Panc1 (cell line): ENCODE measurements at regions of chr9 and their contacts with region 1.

Region 1: GRCh38 chr9:72038890-72039410 is 21.5 kb downstream of the C9orf57 start:
- DNase-seq: peak; percentile 78
- ATAC-seq: peak; percentile 91
- H3K4me3 ChIP-seq: no peak overlapping the region
- H3K27ac ChIP-seq: peak overlapping the region; percentile 2; the same call in 1 of the 2 replicates
- H3K4me1 ChIP-seq: peaks cover 3% of the 10 kb centered on the region; the same call in 1 of the 2 replicates
- H3K27me3 ChIP-seq: no peaks in the 10 kb centered on the region
- CTCF ChIP-seq: peak; percentile 84

Region 2: DNA sequence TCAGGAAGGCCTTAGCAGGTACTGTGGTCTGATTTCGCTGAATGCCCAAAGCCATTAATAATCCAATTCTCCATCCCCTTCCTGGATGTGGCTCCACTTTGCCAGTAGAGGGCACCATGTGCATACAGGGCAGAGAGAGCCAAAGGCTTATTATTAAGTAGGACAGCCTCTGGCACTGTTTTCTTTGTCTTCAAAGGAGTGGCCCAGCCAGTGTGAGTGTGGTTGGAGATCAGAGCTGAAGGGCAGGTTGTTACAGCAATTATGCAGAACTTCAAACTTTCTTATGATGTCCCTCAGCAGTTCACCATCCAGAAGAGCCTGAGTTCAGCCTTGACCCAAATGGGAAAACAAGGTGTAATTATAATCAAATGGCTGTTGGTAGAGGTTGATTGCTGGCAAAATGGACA is 232.0 kb before region 1 on chr9:
- CTCF ChIA-PET with region 1: interaction called, 4 read pairs
- POLR2A ChIA-PET with region 1: interaction called, 12 read pairs
- in situ Hi-C with region 1: no loop called
- intact Hi-C with region 1: no loop called
- DNase-seq: peak; percentile 51
- ATAC-seq: peak; percentile 97
- H3K4me3 ChIP-seq: no peak overlapping the region
- H3K27ac ChIP-seq: peak overlapping the region; percentile 39; the same call in 1 of the 2 replicates
- H3K4me1 ChIP-seq: peaks cover 7% of the 10 kb centered on the region
- H3K27me3 ChIP-seq: no peaks in the 10 kb centered on the region
- CTCF ChIP-seq: peak; percentile 92

Region 3: DNA sequence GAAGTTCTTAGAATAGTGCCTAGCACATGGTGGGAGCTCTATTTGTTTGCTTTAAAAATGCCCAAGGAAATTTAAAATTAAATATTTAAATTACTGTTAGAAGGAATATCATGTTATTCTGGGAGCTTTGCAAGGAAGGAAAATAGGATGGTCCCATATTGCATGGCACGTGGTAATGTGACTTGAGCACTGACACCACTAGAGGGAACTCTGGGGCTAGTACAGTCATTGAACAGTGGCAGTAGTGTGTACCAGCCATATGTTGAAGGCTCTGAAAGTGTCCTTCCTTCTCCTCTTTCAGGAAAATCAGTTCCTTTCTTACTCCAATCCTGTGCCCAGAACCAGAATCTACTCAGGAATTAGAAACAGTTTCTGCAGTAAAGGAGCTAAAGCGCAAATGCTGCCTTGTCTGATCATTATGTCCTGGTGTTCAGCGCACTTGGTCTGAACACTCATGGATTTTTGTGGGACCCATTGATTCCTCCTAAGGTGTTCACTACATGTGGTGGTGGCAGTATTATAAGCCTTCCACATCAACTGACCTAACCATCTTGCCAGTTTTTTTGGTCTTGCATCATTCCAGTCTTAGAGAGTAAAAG is 164.4 kb after region 1 on chr9:
- CTCF ChIA-PET with region 1: interaction called, 5 read pairs
- POLR2A ChIA-PET with region 1: no interaction called
- in situ Hi-C with region 1: no loop called
- intact Hi-C with region 1: loop called (anchors 5 kb)
- DNase-seq: peak; percentile 18
- ATAC-seq: peak; percentile 92
- H3K4me3 ChIP-seq: no peak overlapping the region
- H3K27ac ChIP-seq: no peak overlapping the region
- H3K4me1 ChIP-seq: no peaks in the 10 kb centered on the region
- H3K27me3 ChIP-seq: no peaks in the 10 kb centered on the region
- CTCF ChIP-seq: peak; percentile 77

Region 4: GRCh38 chr9:72271613-72272478 is 232.9 kb after region 1 on chr9:
- CTCF ChIA-PET with region 1: interaction called, 16 read pairs
- POLR2A ChIA-PET with region 1: no interaction called
- in situ Hi-C with region 1: loop called (anchors 10 kb)
- intact Hi-C with region 1: loop called (anchors 1 kb)
- DNase-seq: peak; percentile 22
- ATAC-seq: peak; percentile 81; the same call in 1 of the 2 replicates
- H3K4me3 ChIP-seq: no peak overlapping the region
- H3K27ac ChIP-seq: no peak overlapping the region
- H3K4me1 ChIP-seq: no peaks in the 10 kb centered on the region
- H3K27me3 ChIP-seq: no peaks in the 10 kb centered on the region
- CTCF ChIP-seq: peak; percentile 76